Activated naive CD4-positive, alpha-beta T cell treated with anti-CD3 and anti-CD28 coated beads for 36 hours (primary cell): ENCODE measurements at regions of chr17 and their contacts with region 1.

Region 1: GRCh38 chr17:41264599-41264998 is 579 bp upstream of the KRTAP9-6 start:
- DNase-seq: no peak
- H3K4me3 Mint-ChIP-seq: no peak overlapping the region
- H3K27ac Mint-ChIP-seq: no peak overlapping the region
- H3K4me1 Mint-ChIP-seq: no peaks in the 10 kb centered on the region
- H3K27me3 Mint-ChIP-seq: no peaks in the 10 kb centered on the region

Region 2: GRCh38 chr17:40903129-40904065 is 361.2 kb before region 1 on chr17:
- CTCF ChIA-PET with region 1: no interaction called
- intact Hi-C with region 1: no loop called
- DNase-seq: peak; percentile 9
- H3K4me3 Mint-ChIP-seq: no peak overlapping the region
- H3K27ac Mint-ChIP-seq: no peak overlapping the region
- H3K4me1 Mint-ChIP-seq: peaks cover 14% of the 10 kb centered on the region
- H3K27me3 Mint-ChIP-seq: peaks cover 12% of the 10 kb centered on the region

Region 3: DNA sequence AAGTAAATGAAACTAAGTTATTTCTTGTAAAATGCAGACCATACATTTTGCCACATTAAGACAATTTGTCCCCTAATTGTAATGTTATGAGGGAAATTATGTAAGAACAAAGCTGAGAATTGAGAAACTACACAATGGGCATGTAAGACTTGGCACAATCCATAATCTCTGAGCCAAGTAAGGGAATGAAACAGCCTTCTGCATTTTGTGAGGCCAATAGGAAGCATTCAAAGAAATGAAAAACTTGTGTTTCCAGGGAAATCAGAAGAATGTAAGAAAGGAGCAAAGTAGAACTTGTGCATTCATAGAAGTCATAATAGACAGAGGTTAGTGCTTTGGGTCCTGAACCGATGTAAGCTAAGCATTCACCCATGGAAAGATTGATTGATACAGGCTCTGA is 13.3 kb before region 1 on chr17:
- CTCF ChIA-PET with region 1: no interaction called
- intact Hi-C with region 1: no loop called
- DNase-seq: no peak
- H3K4me3 Mint-ChIP-seq: no peak overlapping the region
- H3K27ac Mint-ChIP-seq: no peak overlapping the region
- H3K4me1 Mint-ChIP-seq: no peaks in the 10 kb centered on the region
- H3K27me3 Mint-ChIP-seq: peaks cover 3% of the 10 kb centered on the region

Region 4: DNA sequence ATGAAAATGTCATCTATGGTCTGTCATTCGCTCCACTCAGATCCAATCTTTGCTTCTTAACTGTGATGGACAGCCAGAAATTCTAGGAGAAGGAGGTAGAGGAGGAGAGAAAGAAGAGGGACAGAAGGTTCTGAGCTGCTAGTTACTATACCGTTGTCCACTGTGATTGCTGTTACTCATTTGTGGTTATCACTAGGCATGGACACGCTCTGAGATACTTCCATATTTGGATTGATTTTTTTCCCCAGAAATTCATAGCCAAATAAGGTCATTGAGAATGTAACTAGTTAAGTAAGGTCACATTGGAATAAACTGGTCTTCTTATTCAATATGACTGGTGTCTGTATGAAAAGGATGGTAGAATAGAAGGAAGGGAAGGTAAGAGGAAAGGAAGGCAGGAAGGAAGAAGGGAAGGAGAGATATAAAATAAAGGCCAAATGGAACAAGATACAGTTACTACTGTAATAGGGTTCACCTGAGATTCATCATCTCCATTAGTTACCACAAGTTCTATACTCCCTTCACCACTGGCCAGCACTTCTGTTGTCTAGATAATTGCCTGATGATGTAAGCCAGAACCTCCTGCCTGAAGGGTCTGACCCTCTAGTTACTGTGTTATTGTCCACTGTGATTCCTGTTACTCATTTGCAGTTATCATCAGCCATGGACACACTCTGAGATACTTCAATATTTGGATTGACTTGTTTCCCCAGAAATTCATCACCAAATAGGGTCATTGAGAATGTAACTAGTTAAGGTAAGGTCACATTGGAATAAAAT is 13.8 kb after region 1 on chr17:
- CTCF ChIA-PET with region 1: no interaction called
- intact Hi-C with region 1: loop called (anchors 1 kb)
- DNase-seq: no peak
- H3K4me3 Mint-ChIP-seq: no peak overlapping the region
- H3K27ac Mint-ChIP-seq: no peak overlapping the region
- H3K4me1 Mint-ChIP-seq: peaks cover 3% of the 10 kb centered on the region
- H3K27me3 Mint-ChIP-seq: no peaks in the 10 kb centered on the region